Right lobe of liver (tissue), 6 donors: ENCODE measurements at regions of chr19 and their contacts with region 1.

Region 1: GRCh38 chr19:19540715-19541440 is 2.8 kb downstream of the CILP2 start:
- DNase-seq: peak in 2 of 3 donors; percentile 51 to 53
- ATAC-seq: peak in 3 of 4 donors; percentile 15 to 40 (median 35)
- H3K4me3 ChIP-seq: no peak overlapping the region
- H3K27ac ChIP-seq: no peak overlapping the region
- H3K4me1 ChIP-seq: peaks cover 0 to 3% (median 0%) of the 10 kb centered on the region in 4 donors
- H3K27me3 ChIP-seq: peaks cover 0 to 6% of the 10 kb centered on the region in 2 donors
- CTCF ChIP-seq: no peak
- POLR2A ChIP-seq: no peak

Region 2: DNA sequence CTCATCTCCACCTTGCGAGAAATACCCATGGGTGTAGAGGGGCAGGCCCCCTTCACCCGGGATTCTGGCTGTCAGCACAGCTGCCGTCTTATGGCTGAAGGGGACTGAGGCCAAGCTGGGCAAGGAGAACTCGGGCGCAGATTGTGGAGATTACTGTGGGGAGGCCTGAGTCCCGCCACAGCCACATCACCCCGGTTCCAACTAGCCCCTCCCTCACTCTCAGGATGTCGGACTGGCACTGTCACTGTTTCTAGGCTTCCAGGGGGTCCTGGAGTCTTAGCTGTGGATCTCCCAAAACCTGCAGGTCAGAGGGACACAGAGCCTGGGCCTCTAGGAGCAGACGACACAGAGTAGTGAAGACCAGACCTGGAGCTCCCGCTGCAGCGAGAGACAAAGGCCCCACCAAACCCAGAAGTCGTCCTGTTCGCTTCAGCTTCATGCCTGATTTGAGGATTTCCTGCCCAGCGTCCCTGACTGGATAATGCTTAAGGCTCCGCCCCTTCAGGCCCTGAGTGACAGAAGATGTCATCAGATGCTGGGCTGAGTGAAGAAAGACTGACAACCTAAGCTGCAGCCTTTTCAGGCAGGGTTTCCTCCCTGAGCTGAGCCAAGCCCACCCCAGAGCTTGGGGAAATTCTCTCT is 415.7 kb after region 1 on chr19:
- intact Hi-C with region 1: loop called (anchors 5 to 10 kb)
- DNase-seq: no peak
- ATAC-seq: no peak
- H3K4me3 ChIP-seq: no peak overlapping the region
- H3K27ac ChIP-seq: no peak overlapping the region
- H3K4me1 ChIP-seq: no peaks in the 10 kb centered on the region
- H3K27me3 ChIP-seq: no peaks in the 10 kb centered on the region
- CTCF ChIP-seq: no peak
- POLR2A ChIP-seq: no peak

Region 3: GRCh38 chr19:19964416-19964815 is 423.5 kb after region 1 on chr19:
- intact Hi-C with region 1: loop called (anchors 5 to 10 kb)
- DNase-seq: no peak
- ATAC-seq: no peak
- H3K4me3 ChIP-seq: no peak overlapping the region
- H3K27ac ChIP-seq: no peak overlapping the region
- H3K4me1 ChIP-seq: no peaks in the 10 kb centered on the region
- H3K27me3 ChIP-seq: no peaks in the 10 kb centered on the region
- CTCF ChIP-seq: no peak
- POLR2A ChIP-seq: no peak